HepG2 (cell line): ENCODE measurements at regions of chr14 and their contacts with region 1.

Region 1: DNA sequence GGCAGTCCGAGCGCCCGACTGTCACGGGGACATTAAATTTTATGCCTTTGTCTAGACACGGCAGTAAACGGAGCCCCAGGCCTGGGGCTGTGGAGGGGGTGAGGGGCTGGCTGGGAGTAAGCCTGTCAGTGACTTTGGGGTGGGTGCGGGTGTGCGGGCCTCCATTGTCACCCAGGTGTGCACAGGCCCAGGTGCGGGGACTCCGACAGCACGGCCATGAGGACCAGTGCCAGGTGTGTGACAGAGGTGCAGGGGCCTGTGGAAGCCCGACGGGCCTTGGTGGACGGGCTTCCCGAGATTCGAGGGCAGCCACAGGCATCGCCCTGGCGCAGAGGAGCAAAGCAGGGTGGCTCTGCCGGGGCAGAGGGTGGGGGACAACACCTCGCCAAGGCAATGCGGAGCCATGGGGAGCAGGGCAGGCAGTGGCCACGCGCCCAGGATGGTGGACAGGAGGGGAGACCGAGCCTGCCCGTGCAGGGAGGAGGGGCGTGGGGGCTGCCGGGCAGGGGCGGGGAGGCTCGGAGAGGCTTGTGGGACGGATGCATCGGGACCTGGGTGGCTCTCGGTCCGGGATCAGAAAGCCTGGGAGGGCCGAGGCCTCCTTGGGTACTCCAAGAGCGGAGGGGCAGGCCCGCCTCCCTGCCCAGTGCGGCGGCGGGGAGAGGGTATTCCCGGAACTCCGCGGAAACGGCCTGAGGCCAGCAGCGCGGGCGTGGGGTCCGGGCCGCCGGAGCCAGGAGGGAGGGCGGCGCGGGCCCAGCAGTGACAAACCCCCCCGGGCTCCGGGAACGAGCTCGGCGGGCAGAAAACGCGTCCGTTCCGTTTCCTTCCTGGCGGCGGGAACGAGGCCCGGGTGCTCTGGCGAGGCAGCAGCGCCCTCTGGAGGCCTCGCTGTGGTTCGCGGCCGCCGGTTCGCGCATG is 1.5 kb downstream of the TMEM121 start:
- DNase-seq: peak; percentile 38
- ATAC-seq: peak; percentile 50
- H3K4me3 ChIP-seq: peak overlapping the region; percentile 79 to 89 (median 80)
- H3K27ac ChIP-seq: peak overlapping the region; percentile 51
- H3K4me1 ChIP-seq: peaks cover 40% of the 10 kb centered on the region
- H3K27me3 ChIP-seq: peaks cover 0 to 17% of the 10 kb centered on the region in 2 experiments; a peak in 3 of 5 replicates
- CTCF ChIP-seq: peak; percentile 93
- EP300 ChIP-seq: no peak
- POLR2A ChIP-seq: no peak; a peak in 1 of 4 replicates
- RAD21 ChIP-seq: peak; percentile 98

Region 2: GRCh38 chr14:105375635-105376057 is 152.3 kb before region 1 on chr14:
- CTCF ChIA-PET with region 1: interaction called, 4 read pairs
- POLR2A ChIA-PET with region 1: no interaction called
- in situ Hi-C with region 1: loop called (anchors 5 kb)
- intact Hi-C with region 1: loop called (anchors 5 kb)
- DNase-seq: no peak
- ATAC-seq: no peak
- H3K4me3 ChIP-seq: no peak overlapping the region
- H3K27ac ChIP-seq: no peak overlapping the region
- H3K4me1 ChIP-seq: no peaks in the 10 kb centered on the region
- H3K27me3 ChIP-seq: no peaks in the 10 kb centered on the region
- CTCF ChIP-seq: no peak
- EP300 ChIP-seq: no peak
- POLR2A ChIP-seq: no peak
- RAD21 ChIP-seq: no peak

Region 3: DNA sequence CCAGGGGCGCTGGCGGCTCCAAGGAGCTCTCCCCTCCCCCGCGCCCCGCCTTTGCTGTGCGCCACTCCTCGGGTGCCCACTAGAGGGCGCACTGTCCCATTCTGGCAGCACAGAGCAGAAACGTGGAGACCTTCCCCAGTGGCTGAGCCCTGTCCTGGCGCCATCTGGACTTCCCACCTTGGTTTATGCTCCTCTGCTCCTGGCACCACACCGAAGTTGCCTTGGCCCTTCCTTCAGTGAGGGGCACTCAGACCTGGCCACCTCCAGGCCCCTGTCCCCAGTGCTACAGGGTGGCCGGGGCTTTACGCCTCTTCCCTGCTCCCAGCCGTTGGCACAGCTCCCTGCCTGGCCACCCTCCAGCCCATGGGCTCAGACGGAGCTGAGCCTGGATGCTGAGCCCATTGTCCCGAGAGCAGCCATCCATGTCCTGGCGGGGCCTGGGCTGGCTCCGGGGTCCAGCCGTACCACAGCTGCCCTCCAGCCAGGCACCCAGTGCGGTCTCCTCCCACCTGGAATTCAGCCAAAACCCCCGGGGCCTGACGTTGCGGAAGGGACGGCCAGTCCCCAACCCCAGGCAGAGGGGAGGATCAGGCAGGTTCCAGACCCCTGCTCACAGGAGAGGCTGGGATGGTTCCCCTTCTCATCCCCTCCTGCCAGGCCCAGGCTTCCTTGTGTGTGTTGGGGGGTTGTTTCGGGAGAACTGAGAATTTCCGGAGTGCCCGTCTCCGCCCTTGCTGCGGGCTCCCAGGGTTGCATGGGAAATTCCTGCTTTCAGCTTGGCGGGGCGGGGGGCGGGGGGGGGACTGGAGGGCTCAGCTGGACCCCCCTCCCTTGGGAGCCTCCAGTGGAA is 46.7 kb before region 1 on chr14:
- CTCF ChIA-PET with region 1: interaction called, 15 read pairs
- POLR2A ChIA-PET with region 1: interaction called, 4 read pairs
- in situ Hi-C with region 1: loop called (anchors 5 kb)
- intact Hi-C with region 1: loop called (anchors 2 kb)
- DNase-seq: peak; percentile 67
- ATAC-seq: peak; percentile 38
- H3K4me3 ChIP-seq: peak overlapping the region; percentile 53 to 82 (median 61)
- H3K27ac ChIP-seq: peak overlapping the region; percentile 83
- H3K4me1 ChIP-seq: peaks cover 67% of the 10 kb centered on the region
- H3K27me3 ChIP-seq: peaks cover 2 to 32% of the 10 kb centered on the region in 2 experiments; a peak in 4 of 5 replicates
- CTCF ChIP-seq: peak; percentile 99
- EP300 ChIP-seq: no peak
- POLR2A ChIP-seq: peak in 1 of 2 experiments; percentile 66; a peak in 2 of 4 replicates
- RAD21 ChIP-seq: peak; percentile 84

Region 4: DNA sequence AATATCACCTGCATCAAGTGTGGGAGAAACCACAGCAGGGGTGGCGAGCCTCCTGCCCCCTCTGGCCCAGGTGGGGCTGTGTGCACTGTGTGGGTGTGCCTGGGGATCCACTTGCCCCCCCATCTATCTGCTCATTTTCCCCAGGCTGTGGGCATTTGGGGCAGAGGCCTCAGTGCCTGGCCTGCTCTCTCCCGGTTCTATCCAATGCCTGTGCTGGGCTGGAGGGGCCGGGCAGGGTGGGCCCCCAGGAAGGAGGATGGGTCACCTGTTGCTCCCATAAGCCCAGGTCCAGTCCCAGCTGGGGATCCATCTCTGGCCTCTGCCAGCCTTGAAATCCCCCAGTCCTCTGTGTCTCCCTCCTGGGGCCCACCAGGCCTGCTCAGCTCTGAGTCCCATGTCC is 104.1 kb after region 1 on chr14:
- CTCF ChIA-PET with region 1: no interaction called
- POLR2A ChIA-PET with region 1: no interaction called
- in situ Hi-C with region 1: no loop called
- intact Hi-C with region 1: no loop called
- DNase-seq: no peak
- ATAC-seq: no peak
- H3K4me3 ChIP-seq: no peak overlapping the region
- H3K27ac ChIP-seq: no peak overlapping the region
- H3K4me1 ChIP-seq: no peaks in the 10 kb centered on the region
- H3K27me3 ChIP-seq: peaks cover 0 to 2% of the 10 kb centered on the region in 2 experiments; a peak in 2 of 5 replicates
- CTCF ChIP-seq: no peak
- EP300 ChIP-seq: no peak
- POLR2A ChIP-seq: no peak
- RAD21 ChIP-seq: no peak